T-cell (primary cell): ENCODE measurements at regions of chr10 and their contacts with region 1.

Region 1: GRCh38 chr10:93376372-93377293 is 105.5 kb downstream of the MYOF start:
- DNase-seq: peak in 26 of 35 experiments; percentile 3 to 82 (median 22)
- ATAC-seq: peak; percentile 58 to 79 (median 72)
- H3K4me3 ChIP-seq: no peak overlapping the region
- H3K4me3 Mint-ChIP-seq: no peak overlapping the region
- H3K27ac ChIP-seq: no peak overlapping the region
- H3K27ac Mint-ChIP-seq: no peak overlapping the region
- H3K4me1 ChIP-seq: peaks cover 0 to 3% of the 10 kb centered on the region in 2 experiments
- H3K4me1 Mint-ChIP-seq: peaks cover 0 to 12% (median 9%) of the 10 kb centered on the region in 3 donors
- H3K27me3 ChIP-seq: no peaks in the 10 kb centered on the region
- H3K27me3 Mint-ChIP-seq: peaks cover 2 to 8% of the 10 kb centered on the region in 2 donors

Region 2: DNA sequence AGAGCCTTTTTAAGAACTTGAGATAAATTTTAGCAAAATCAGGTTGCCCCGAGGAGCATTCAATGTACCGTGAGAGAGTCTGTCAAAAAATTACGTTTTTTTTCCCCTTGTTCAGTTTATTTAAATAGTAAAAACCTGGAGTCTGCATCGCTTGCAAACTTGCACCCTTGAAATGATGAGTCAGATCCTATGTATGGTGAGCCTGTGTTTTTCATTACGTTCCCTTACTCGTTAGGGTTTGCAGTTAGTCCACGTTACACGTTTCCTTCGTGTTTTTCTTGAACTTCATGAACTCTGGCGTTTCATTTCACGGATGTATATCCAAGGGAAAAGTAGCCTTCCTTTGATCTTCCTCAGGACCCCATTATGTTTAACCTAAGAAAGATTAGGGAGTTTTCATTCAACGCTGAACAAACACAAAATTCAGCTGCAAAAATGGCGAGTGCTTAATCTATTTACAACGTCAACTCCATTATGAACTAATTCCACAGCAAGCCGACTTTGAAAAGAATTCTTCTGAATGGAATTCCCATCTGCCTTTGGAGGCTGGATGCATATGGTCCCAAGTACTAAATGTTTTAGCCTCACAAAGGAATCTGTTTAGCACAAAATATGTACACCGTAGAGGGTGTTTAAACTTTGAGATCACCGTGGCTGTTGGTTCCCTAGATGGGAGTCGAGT is 76.9 kb before region 1 on chr10:
- CTCF ChIA-PET with region 1: no interaction called
- POLR2A ChIA-PET with region 1: no interaction called
- DNase-seq: no peak
- ATAC-seq: no peak
- H3K4me3 ChIP-seq: no peak overlapping the region
- H3K4me3 Mint-ChIP-seq: no peak overlapping the region
- H3K27ac ChIP-seq: no peak overlapping the region
- H3K27ac Mint-ChIP-seq: no peak overlapping the region
- H3K4me1 ChIP-seq: no peaks in the 10 kb centered on the region
- H3K4me1 Mint-ChIP-seq: no peaks in the 10 kb centered on the region
- H3K27me3 ChIP-seq: no peaks in the 10 kb centered on the region
- H3K27me3 Mint-ChIP-seq: peaks cover 0 to 3% of the 10 kb centered on the region in 2 donors

Region 3: DNA sequence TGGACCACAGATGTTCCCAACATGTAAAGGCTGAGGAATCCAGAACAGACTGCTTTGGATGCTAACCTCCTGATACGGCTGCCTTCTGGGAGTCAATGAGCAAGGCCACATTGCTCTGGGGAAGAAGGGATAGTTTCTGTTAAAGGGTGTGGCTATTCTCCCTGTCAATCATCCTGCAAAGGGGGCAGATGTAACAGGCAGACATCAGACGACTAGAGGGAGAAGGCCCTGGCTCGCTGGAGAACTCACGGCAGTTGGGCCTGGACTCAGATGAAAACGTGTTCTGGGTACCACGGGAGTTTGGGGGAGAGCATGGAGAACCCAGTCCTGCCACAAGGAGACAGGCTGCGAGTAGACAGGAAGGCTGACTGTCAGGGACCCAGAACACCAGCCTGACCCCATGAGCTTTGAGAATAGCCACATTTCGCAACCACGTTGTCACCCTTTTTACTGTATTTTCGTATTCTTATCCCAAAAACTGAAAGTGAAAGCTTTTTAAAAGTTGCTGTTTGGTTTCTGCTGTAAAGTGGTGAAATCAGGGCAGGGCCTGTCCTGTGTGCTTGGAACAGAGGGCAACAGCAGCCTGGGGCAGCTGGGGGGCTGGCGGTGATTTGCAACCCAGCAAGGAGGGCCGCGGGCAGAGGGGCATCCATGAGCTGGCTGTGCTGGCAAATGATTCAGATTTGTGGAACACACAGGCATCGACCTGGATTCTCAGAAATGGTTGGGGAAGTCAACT is 10.2 kb after region 1 on chr10:
- CTCF ChIA-PET with region 1: interaction called, 4 to 10 read pairs
- POLR2A ChIA-PET with region 1: no interaction called
- DNase-seq: peak in 4 of 35 experiments; percentile 0 to 21 (median 7)
- ATAC-seq: peak in 1 of 4 experiments; percentile 27
- H3K4me3 ChIP-seq: no peak overlapping the region
- H3K4me3 Mint-ChIP-seq: peak overlapping the region; percentile 6 to 22 (median 8)
- H3K27ac ChIP-seq: peak overlapping the region; percentile 40
- H3K27ac Mint-ChIP-seq: peak overlapping the region; percentile 53 to 65
- H3K4me1 ChIP-seq: peaks cover 2 to 14% of the 10 kb centered on the region in 2 experiments
- H3K4me1 Mint-ChIP-seq: peaks cover 21 to 23% (median 22%) of the 10 kb centered on the region in 3 donors
- H3K27me3 ChIP-seq: no peaks in the 10 kb centered on the region
- H3K27me3 Mint-ChIP-seq: peaks cover 0 to 3% of the 10 kb centered on the region in 2 donors

Region 4: GRCh38 chr10:93482145-93482834 is 105.7 kb after region 1 on chr10 and contains the start of gene MYOF:
- CTCF ChIA-PET with region 1: interaction called, 102 to 182 read pairs
- POLR2A ChIA-PET with region 1: interaction called in 1 of 2 experiments, 3 read pairs
- DNase-seq: peak in 30 of 35 experiments; percentile 13 to 80 (median 36)
- ATAC-seq: peak; percentile 89 to 96 (median 91)
- H3K4me3 ChIP-seq: peak within 1 kb of the TSS; percentile 50 to 88
- H3K4me3 Mint-ChIP-seq: peak within 1 kb of the TSS; percentile 77 to 88 (median 86)
- H3K27ac ChIP-seq: no peak within 1 kb of the TSS
- H3K27ac Mint-ChIP-seq: no peak within 1 kb of the TSS
- H3K4me1 ChIP-seq: peaks cover 3 to 7% of the 10 kb centered on the region in 2 experiments
- H3K4me1 Mint-ChIP-seq: peaks cover 10 to 12% (median 12%) of the 10 kb centered on the region in 3 donors
- H3K27me3 ChIP-seq: peaks cover 8 to 10% of the 10 kb centered on the region in 2 experiments
- H3K27me3 Mint-ChIP-seq: peaks cover 21 to 28% of the 10 kb centered on the region in 2 donors
- total RNA-seq, gene MYOF: 0.65 to 1.1 (median 0.86) TPM

Region 5: DNA sequence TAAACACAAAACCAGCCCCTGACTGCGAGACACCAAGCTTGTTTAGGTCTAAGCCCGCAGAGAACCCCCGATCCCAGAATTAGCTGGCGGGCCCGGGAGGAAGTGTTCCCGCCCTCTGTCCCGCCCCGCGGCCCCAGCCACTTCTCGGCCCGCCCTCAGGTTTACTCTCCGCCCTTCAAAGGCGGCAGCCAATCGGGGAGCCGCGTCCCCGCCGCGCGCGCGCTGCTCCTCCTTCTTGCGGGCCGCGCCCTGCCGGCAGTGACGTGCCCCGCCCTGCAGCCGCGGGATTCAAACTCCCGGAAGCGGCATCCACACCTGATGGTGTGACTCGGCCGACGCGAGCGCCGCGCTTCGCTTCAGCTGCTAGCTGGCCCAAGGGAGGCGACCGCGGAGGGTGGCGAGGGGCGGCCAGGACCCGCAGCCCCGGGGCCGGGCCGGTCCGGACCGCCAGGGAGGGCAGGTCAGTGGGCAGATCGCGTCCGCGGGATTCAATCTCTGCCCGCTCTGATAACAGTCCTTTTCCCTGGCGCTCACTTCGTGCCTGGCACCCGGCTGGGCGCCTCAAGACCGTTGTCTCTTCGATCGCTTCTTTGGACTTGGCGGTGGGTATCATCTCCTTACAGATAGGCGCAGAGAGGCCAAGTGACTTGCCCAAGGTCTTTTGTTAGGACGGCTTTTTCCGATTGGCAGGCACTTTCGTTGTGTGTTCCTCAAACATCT is 119.8 kb after region 1 on chr10 and contains the start of gene CEP55:
- CTCF ChIA-PET with region 1: interaction called, 7 to 12 read pairs
- POLR2A ChIA-PET with region 1: no interaction called
- DNase-seq: peak; percentile 84 to 96 (median 93)
- ATAC-seq: peak; percentile 99 to 100 (median 100)
- H3K4me3 ChIP-seq: peak within 1 kb of the TSS; percentile 65 to 89
- H3K4me3 Mint-ChIP-seq: peak within 1 kb of the TSS; percentile 88 to 92 (median 88)
- H3K27ac ChIP-seq: no peak within 1 kb of the TSS
- H3K27ac Mint-ChIP-seq: peak within 1 kb of the TSS; percentile 52 to 71
- H3K4me1 ChIP-seq: peaks cover 4 to 20% of the 10 kb centered on the region in 2 experiments
- H3K4me1 Mint-ChIP-seq: peaks cover 14 to 23% (median 20%) of the 10 kb centered on the region in 3 donors
- H3K27me3 ChIP-seq: no peaks in the 10 kb centered on the region
- H3K27me3 Mint-ChIP-seq: peaks cover 8% of the 10 kb centered on the region in 2 donors
- total RNA-seq, gene CEP55: 0.35 to 0.95 (median 0.49) TPM

Region 6: DNA sequence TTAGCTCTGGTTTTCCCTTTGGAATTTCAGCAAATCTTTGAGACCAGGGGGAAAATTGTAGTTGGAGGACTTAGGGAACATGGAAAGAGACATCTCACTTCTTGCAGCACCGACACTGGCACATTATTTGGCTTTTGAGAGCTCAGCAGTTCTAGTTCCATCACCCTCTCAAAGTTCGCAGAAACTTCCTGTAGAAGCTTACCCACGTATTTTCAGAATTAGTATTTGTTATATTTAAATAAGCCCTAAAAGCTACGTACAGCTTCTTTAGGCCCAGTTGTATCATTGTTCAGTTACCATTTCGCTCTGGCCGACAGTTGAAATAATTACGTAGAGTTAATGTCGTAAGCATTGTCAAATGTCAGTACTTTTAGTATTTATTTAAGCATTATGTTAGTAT is 133.2 kb after region 1 on chr10:
- CTCF ChIA-PET with region 1: interaction called, 13 to 37 read pairs
- POLR2A ChIA-PET with region 1: no interaction called
- DNase-seq: no peak
- ATAC-seq: no peak
- H3K4me3 ChIP-seq: no peak overlapping the region
- H3K4me3 Mint-ChIP-seq: no peak overlapping the region
- H3K27ac ChIP-seq: no peak overlapping the region
- H3K27ac Mint-ChIP-seq: no peak overlapping the region
- H3K4me1 ChIP-seq: no peaks in the 10 kb centered on the region
- H3K4me1 Mint-ChIP-seq: peaks cover 0 to 7% (median 0%) of the 10 kb centered on the region in 3 donors
- H3K27me3 ChIP-seq: no peaks in the 10 kb centered on the region
- H3K27me3 Mint-ChIP-seq: no peaks in the 10 kb centered on the region